ENCODE measurements at regions of chrX and their contacts with region 1.

Region 1: GRCh38 chrX:149003863-149004660 is 501.0 kb downstream of the IDS start:
- DNase-seq: peak; percentile 26
- ATAC-seq: peak; percentile 71
- H3K4me3 ChIP-seq: no peak overlapping the region
- H3K27ac ChIP-seq: no peak overlapping the region
- H3K4me1 ChIP-seq: no peaks in the 10 kb centered on the region; the same call in 1 of the 2 replicates
- H3K27me3 ChIP-seq: no peaks in the 10 kb centered on the region
- CTCF ChIP-seq: no peak
- EP300 ChIP-seq: peak in 1 of 2 experiments; percentile 47; a peak in 1 of 4 replicates
- POLR2A ChIP-seq: no peak
- RAD21 ChIP-seq: no peak

Region 2: GRCh38 chrX:148885207-148885606 is 118.9 kb before region 1 on chrX:
- CTCF ChIA-PET with region 1: interaction called, 5 read pairs
- POLR2A ChIA-PET with region 1: no interaction called
- RAD21 ChIA-PET with region 1: interaction called, 4 read pairs
- SMC1A ChIA-PET with region 1: interaction called, 10 read pairs
- in situ Hi-C with region 1: no loop called
- intact Hi-C with region 1: no loop called
- DNase-seq: no peak
- ATAC-seq: peak; percentile 61
- H3K4me3 ChIP-seq: no peak overlapping the region
- H3K27ac ChIP-seq: no peak overlapping the region
- H3K4me1 ChIP-seq: no peaks in the 10 kb centered on the region
- H3K27me3 ChIP-seq: no peaks in the 10 kb centered on the region
- CTCF ChIP-seq: peak in 1 of 3 experiments; percentile 27; a peak in 3 of 6 replicates
- EP300 ChIP-seq: no peak
- POLR2A ChIP-seq: no peak
- RAD21 ChIP-seq: peak; percentile 44

Region 3: GRCh38 chrX:149021159-149021558 is 17.1 kb after region 1 on chrX:
- CTCF ChIA-PET with region 1: interaction called, 10 read pairs
- POLR2A ChIA-PET with region 1: no interaction called
- RAD21 ChIA-PET with region 1: interaction called, 5 read pairs
- SMC1A ChIA-PET with region 1: interaction called, 20 read pairs
- in situ Hi-C with region 1: no loop called
- intact Hi-C with region 1: no loop called
- DNase-seq: no peak
- ATAC-seq: peak; percentile 53
- H3K4me3 ChIP-seq: no peak overlapping the region
- H3K27ac ChIP-seq: no peak overlapping the region
- H3K4me1 ChIP-seq: no peaks in the 10 kb centered on the region
- H3K27me3 ChIP-seq: no peaks in the 10 kb centered on the region
- CTCF ChIP-seq: no peak
- EP300 ChIP-seq: no peak
- POLR2A ChIP-seq: no peak
- RAD21 ChIP-seq: no peak

Region 4: GRCh38 chrX:149040873-149041535 is 36.9 kb after region 1 on chrX:
- CTCF ChIA-PET with region 1: interaction called, 4 read pairs
- POLR2A ChIA-PET with region 1: no interaction called
- RAD21 ChIA-PET with region 1: interaction called, 13 read pairs
- SMC1A ChIA-PET with region 1: interaction called, 10 read pairs
- in situ Hi-C with region 1: no loop called
- intact Hi-C with region 1: no loop called
- DNase-seq: no peak
- ATAC-seq: peak; percentile 82
- H3K4me3 ChIP-seq: no peak overlapping the region
- H3K27ac ChIP-seq: no peak overlapping the region
- H3K4me1 ChIP-seq: no peaks in the 10 kb centered on the region
- H3K27me3 ChIP-seq: no peaks in the 10 kb centered on the region
- CTCF ChIP-seq: no peak
- EP300 ChIP-seq: no peak
- POLR2A ChIP-seq: no peak
- RAD21 ChIP-seq: 0 out of 2 replicates have a peak, but pooled peaks have one; percentile 3

Region 5: DNA sequence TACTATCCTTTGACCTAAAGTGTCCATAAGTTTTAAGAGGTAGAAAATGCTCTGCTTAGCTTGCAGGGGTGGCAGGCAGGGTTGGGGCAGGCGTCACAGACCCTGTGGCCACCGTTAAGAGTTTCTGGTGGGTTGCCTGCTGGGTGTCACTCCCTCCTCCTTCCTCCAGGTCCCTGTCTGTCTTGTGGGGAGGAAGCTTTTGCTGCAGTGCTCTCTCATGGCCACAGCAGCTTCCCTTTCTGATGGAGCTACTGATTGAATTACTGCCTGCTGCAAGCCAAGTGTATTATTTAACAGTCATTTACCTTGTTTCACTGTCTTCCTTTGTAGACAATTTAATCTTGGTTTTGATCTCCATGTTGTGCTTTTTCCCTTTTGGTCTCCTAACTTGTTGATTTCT is 116.4 kb after region 1 on chrX:
- CTCF ChIA-PET with region 1: interaction called, 5 read pairs
- POLR2A ChIA-PET with region 1: interaction called, 3 read pairs
- RAD21 ChIA-PET with region 1: interaction called, 12 read pairs
- SMC1A ChIA-PET with region 1: interaction called, 21 read pairs
- in situ Hi-C with region 1: no loop called
- intact Hi-C with region 1: loop called (anchors 5 kb)
- DNase-seq: no peak
- ATAC-seq: peak; percentile 64
- H3K4me3 ChIP-seq: no peak overlapping the region
- H3K27ac ChIP-seq: no peak overlapping the region
- H3K4me1 ChIP-seq: no peaks in the 10 kb centered on the region
- H3K27me3 ChIP-seq: no peaks in the 10 kb centered on the region
- CTCF ChIP-seq: 0 out of 6 replicates have a peak, but pooled peaks of 1 of the 3 experiments have one; percentile 3
- EP300 ChIP-seq: no peak
- POLR2A ChIP-seq: no peak
- RAD21 ChIP-seq: peak; percentile 6; the same call in 1 of the 2 replicates

Region 6: DNA sequence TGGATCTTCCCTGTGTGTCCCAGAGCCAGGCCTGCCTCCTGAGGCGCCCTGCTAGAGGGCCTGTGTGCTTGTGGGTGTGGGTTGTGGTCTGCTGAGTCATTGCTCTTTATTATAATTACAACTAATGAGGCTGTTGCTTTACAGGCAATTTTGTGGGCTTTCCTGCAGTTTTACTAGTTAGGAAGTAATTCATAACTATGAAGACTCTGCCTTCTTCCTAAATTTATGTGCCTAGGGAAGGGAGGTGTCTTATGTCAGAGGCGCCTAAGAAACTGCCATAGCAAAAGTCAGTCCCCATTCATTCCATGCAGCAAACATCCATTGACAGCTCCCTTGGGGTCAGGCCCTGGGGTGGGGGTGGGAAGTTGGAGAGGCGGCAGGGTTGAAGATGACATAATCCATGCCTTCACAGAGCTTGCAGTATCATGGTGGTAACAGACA is 141.8 kb after region 1 on chrX:
- CTCF ChIA-PET with region 1: no interaction called
- POLR2A ChIA-PET with region 1: interaction called, 4 read pairs
- RAD21 ChIA-PET with region 1: interaction called, 4 read pairs
- SMC1A ChIA-PET with region 1: interaction called, 19 read pairs
- in situ Hi-C with region 1: no loop called
- intact Hi-C with region 1: no loop called
- DNase-seq: no peak
- ATAC-seq: peak; percentile 92
- H3K4me3 ChIP-seq: no peak overlapping the region
- H3K27ac ChIP-seq: no peak overlapping the region
- H3K4me1 ChIP-seq: no peaks in the 10 kb centered on the region
- H3K27me3 ChIP-seq: no peaks in the 10 kb centered on the region
- CTCF ChIP-seq: no peak
- EP300 ChIP-seq: peak in 1 of 2 experiments; percentile 17; a peak in 1 of 4 replicates
- POLR2A ChIP-seq: no peak
- RAD21 ChIP-seq: no peak

Region 7: DNA sequence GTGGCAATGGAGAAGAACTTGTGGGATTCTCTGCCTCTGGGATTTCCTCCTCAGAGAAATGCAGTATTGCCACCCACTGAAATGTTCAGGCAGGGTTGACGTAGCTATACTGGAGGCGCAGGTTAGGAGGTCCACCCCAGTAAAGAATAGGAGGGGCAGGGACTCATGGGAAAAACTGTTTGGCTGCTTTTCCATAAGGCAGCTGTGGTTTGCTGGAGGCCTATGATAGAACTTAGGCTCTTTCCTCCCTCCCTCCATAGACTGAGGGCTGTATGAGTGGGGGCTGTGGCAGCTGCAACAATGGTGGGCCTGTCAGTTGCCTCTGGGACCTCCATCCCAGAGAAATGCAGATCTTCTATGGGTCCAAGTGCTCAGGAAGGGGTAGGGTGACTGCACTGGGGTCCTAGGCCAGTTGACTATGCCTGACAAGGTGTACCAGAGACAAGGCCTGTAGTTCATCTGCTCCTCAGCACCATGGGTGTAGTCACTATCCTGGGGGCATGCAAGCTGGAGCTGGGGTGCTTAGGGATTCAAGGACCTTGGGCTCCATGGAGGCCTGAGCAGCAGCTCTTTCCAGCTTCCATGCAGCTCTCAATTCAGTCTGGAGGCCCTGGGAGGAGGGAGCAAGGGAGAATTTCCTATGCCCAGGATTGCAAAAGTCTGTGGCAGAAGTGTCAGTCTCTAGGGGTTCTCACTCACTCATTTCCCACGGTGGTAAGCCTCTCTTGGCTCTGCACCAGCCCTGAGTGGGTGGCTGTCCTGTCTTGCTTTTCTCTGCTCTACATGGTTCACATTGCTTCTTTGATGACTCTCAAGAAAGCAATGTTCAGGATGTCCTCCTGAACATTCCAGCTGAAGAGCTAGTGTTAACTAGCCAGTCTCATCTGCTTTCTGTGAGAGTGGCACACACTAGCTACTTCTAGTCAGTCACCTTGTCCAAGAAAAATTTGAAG is 148.0 kb after region 1 on chrX:
- CTCF ChIA-PET with region 1: interaction called, 4 read pairs
- POLR2A ChIA-PET with region 1: no interaction called
- RAD21 ChIA-PET with region 1: interaction called, 3 read pairs
- SMC1A ChIA-PET with region 1: interaction called, 18 read pairs
- in situ Hi-C with region 1: no loop called
- intact Hi-C with region 1: no loop called
- DNase-seq: peak; percentile 24
- ATAC-seq: peak; percentile 85
- H3K4me3 ChIP-seq: no peak overlapping the region
- H3K27ac ChIP-seq: no peak overlapping the region
- H3K4me1 ChIP-seq: no peaks in the 10 kb centered on the region
- H3K27me3 ChIP-seq: no peaks in the 10 kb centered on the region
- CTCF ChIP-seq: no peak
- EP300 ChIP-seq: no peak
- POLR2A ChIP-seq: no peak
- RAD21 ChIP-seq: no peak

Measured in GM12878 (cell line).